ENCODE measurements at regions of chr1 and their contacts with region 1.

Region 1: GRCh38 chr1:31548907-31549808 is 27.2 kb upstream of the TINAGL1 start:
- DNase-seq: peak; percentile 59 to 98
- H3K4me3 ChIP-seq: peak overlapping the region; percentile 34 to 79 (median 64); a peak in 7 of 8 replicates
- H3K27ac ChIP-seq: no peak overlapping the region
- H3K4me1 ChIP-seq: peaks cover 0 to 11% (median 5%) of the 10 kb centered on the region in 4 experiments; a peak in 5 of 7 replicates
- H3K27me3 ChIP-seq: no peaks in the 10 kb centered on the region
- CTCF ChIP-seq: peak; percentile 91 to 95 (median 92)
- EP300 ChIP-seq: no peak; a peak in 1 of 3 replicates
- POLR2A ChIP-seq: peak in 1 of 2 experiments; percentile 71; a peak in 2 of 3 replicates
- RAD21 ChIP-seq: peak; percentile 91 to 96

Region 2: GRCh38 chr1:31422505-31423319 is 126.4 kb before region 1 on chr1:
- CTCF ChIA-PET with region 1: interaction called, 84 read pairs
- POLR2A ChIA-PET with region 1: interaction called, 4 read pairs
- DNase-seq: peak in 1 of 2 experiments; percentile 95
- H3K4me3 ChIP-seq: no peak overlapping the region
- H3K27ac ChIP-seq: no peak overlapping the region
- H3K4me1 ChIP-seq: peaks cover 0 to 3% (median 2%) of the 10 kb centered on the region in 4 experiments; a peak in 1 of 7 replicates
- H3K27me3 ChIP-seq: no peaks in the 10 kb centered on the region
- CTCF ChIP-seq: peak; percentile 88 to 98 (median 88)
- EP300 ChIP-seq: no peak
- POLR2A ChIP-seq: no peak
- RAD21 ChIP-seq: peak; percentile 95 to 97

Region 3: DNA sequence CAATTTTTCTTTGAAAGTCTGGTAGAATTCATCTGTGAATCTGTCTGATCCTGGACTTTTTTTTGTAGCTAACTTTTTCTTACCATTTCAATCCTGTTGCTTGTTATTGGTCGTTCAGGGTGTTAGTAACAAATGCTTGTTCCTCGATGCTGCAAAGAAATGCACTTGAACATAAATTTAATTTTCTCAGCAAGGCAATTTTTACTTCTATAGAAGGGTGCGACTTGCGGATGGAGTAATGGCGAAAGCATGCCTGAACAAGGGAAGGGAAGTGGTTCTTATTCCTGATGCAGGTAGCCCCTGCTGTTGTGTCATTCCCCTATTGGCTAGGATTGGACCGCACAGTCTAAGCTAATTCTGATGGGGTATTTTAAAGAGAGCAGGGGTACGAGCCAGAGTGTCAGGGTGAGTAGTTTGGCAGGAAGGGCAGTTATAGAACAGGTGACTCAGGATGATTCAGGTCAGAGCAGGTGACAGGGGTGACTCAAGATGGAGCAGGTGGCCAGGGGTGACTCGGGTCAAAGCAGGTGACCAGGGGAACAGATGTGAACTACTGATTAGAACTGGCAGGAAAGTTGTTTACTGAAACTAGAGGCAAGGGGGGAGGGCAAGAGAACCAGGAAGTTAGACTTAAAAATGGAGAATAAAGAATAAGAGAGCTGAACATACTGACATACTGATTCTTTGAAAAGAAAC is 95.6 kb before region 1 on chr1:
- CTCF ChIA-PET with region 1: interaction called, 25 read pairs
- POLR2A ChIA-PET with region 1: no interaction called
- DNase-seq: no peak
- H3K4me3 ChIP-seq: no peak overlapping the region
- H3K27ac ChIP-seq: no peak overlapping the region
- H3K4me1 ChIP-seq: no peaks in the 10 kb centered on the region
- H3K27me3 ChIP-seq: no peaks in the 10 kb centered on the region
- CTCF ChIP-seq: no peak
- EP300 ChIP-seq: no peak
- POLR2A ChIP-seq: no peak
- RAD21 ChIP-seq: no peak

Region 4: GRCh38 chr1:31467005-31467700 is 82.0 kb before region 1 on chr1:
- CTCF ChIA-PET with region 1: interaction called, 77 read pairs
- POLR2A ChIA-PET with region 1: interaction called, 5 read pairs
- DNase-seq: no peak
- H3K4me3 ChIP-seq: no peak overlapping the region
- H3K27ac ChIP-seq: no peak overlapping the region
- H3K4me1 ChIP-seq: peaks cover 0 to 2% (median 0%) of the 10 kb centered on the region in 4 experiments; a peak in 1 of 7 replicates
- H3K27me3 ChIP-seq: no peaks in the 10 kb centered on the region
- CTCF ChIP-seq: no peak
- EP300 ChIP-seq: no peak
- POLR2A ChIP-seq: no peak
- RAD21 ChIP-seq: no peak

Region 5: DNA sequence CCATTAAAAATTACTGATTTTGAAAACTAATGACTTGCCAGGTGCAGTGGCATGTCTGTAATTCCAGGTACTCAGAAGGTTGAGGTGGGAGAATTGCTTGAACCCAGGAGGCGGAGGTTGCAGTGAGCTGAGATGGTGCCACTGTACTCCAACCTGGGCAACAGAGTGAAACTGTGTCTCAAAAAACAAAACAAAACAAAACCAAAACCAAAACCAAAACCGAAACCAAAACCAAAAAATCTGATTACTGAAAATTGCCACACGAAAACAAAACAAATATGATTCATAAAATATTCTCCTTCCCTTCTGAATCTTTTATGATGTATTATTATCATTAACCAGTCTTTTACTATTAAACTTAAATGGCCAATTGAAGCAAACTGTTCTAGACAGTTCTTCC is 62.0 kb before region 1 on chr1:
- CTCF ChIA-PET with region 1: interaction called, 18 read pairs
- POLR2A ChIA-PET with region 1: interaction called, 3 read pairs
- DNase-seq: no peak
- H3K4me3 ChIP-seq: no peak overlapping the region
- H3K27ac ChIP-seq: no peak overlapping the region
- H3K4me1 ChIP-seq: peaks cover 0 to 12% (median 2%) of the 10 kb centered on the region in 4 experiments; a peak in 6 of 7 replicates
- H3K27me3 ChIP-seq: no peaks in the 10 kb centered on the region
- CTCF ChIP-seq: no peak
- EP300 ChIP-seq: no peak
- POLR2A ChIP-seq: no peak
- RAD21 ChIP-seq: no peak

Region 6: GRCh38 chr1:31531177-31531999 is 17.8 kb before region 1 on chr1:
- CTCF ChIA-PET with region 1: interaction called, 43 read pairs
- POLR2A ChIA-PET with region 1: interaction called, 4 read pairs
- DNase-seq: no peak
- H3K4me3 ChIP-seq: no peak overlapping the region
- H3K27ac ChIP-seq: no peak overlapping the region
- H3K4me1 ChIP-seq: no peaks in the 10 kb centered on the region
- H3K27me3 ChIP-seq: no peaks in the 10 kb centered on the region
- CTCF ChIP-seq: no peak
- EP300 ChIP-seq: no peak
- POLR2A ChIP-seq: no peak
- RAD21 ChIP-seq: no peak

Region 7: GRCh38 chr1:31593770-31594632 is 44.8 kb after region 1 on chr1:
- CTCF ChIA-PET with region 1: interaction called, 10 read pairs
- POLR2A ChIA-PET with region 1: interaction called, 3 read pairs
- DNase-seq: peak; percentile 62 to 96
- H3K4me3 ChIP-seq: no peak overlapping the region
- H3K27ac ChIP-seq: no peak overlapping the region
- H3K4me1 ChIP-seq: peaks cover 0 to under 1% (median 0%) of the 10 kb centered on the region in 4 experiments; a peak in 2 of 7 replicates
- H3K27me3 ChIP-seq: peaks cover 0 to 1% (median under 1%) of the 10 kb centered on the region in 4 experiments; a peak in 1 of 7 replicates
- CTCF ChIP-seq: peak; percentile 96 to 100 (median 99)
- EP300 ChIP-seq: no peak
- POLR2A ChIP-seq: no peak
- RAD21 ChIP-seq: peak; percentile 87 to 91

Region 8: GRCh38 chr1:31626223-31627207 is 77.4 kb after region 1 on chr1:
- CTCF ChIA-PET with region 1: no interaction called
- POLR2A ChIA-PET with region 1: no interaction called
- DNase-seq: no peak
- H3K4me3 ChIP-seq: no peak overlapping the region
- H3K27ac ChIP-seq: no peak overlapping the region; the same call in 1 of the 2 replicates
- H3K4me1 ChIP-seq: peaks cover 0 to 4% (median 0%) of the 10 kb centered on the region in 4 experiments; a peak in 1 of 7 replicates
- H3K27me3 ChIP-seq: no peaks in the 10 kb centered on the region
- CTCF ChIP-seq: no peak
- EP300 ChIP-seq: no peak
- POLR2A ChIP-seq: no peak
- RAD21 ChIP-seq: no peak

Region 9: DNA sequence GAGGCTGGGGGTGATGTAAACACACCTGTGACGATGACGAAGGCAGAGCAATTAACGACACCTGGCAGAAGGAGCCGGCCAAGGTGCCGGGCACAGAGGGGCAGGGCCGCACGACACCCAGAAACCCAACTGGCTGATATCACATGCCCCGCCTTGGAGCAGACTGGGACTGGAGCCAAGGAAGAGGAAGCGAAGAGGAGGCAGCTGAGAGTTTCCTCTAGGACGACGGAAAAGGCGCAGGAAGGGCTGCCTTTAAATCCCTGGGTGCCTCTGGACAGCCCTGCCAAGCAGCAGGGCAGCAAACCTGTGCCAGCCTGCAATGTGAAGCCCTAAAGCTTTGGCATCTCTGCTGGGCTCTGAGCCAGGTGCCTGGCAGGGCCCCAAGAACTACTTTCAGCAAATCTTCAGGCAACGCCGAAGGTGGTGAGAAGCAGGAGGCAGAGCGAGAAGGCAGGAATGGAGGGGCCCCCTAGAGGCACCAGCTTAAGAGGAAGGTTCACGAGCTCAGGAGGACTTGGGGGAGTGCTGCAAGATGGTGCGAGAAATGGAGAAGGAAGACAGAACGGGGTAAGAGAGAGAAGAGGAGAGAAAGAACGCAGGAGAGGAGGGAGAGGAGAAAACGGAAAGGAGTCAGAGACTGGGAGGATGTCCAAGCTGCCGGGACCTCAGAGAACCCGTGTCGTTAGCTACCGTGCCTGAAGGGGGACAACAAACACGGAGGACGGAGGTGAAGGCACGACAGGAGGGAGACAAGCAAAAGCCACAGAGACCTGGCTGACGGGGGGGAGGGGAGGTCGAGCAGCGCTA is 120.8 kb after region 1 on chr1:
- CTCF ChIA-PET with region 1: no interaction called
- POLR2A ChIA-PET with region 1: no interaction called
- DNase-seq: no peak
- H3K4me3 ChIP-seq: peak overlapping the region in 1 of 4 experiments; percentile 14; a peak in 1 of 8 replicates
- H3K27ac ChIP-seq: no peak overlapping the region
- H3K4me1 ChIP-seq: peaks cover 0 to 13% (median 8%) of the 10 kb centered on the region in 4 experiments; a peak in 5 of 7 replicates
- H3K27me3 ChIP-seq: no peaks in the 10 kb centered on the region
- CTCF ChIP-seq: peak in 2 of 3 experiments; percentile 1 to 8; a peak in 2 of 4 replicates
- EP300 ChIP-seq: no peak
- POLR2A ChIP-seq: no peak
- RAD21 ChIP-seq: no peak; a peak in 1 of 4 replicates

Measured in H1 (cell line).